HepG2 (cell line): ENCODE measurements at regions of chr11 and their contacts with region 1.

Region 1: GRCh38 chr11:45771566-45772448 is 33.1 kb upstream of the SLC35C1 start:
- DNase-seq: peak; percentile 50
- ATAC-seq: peak; percentile 98
- H3K4me3 ChIP-seq: peak overlapping the region; percentile 52 to 72 (median 60)
- H3K27ac ChIP-seq: no peak overlapping the region
- H3K4me1 ChIP-seq: peaks cover 9% of the 10 kb centered on the region; the same call in 1 of the 2 replicates
- H3K27me3 ChIP-seq: peaks cover 2 to 32% of the 10 kb centered on the region in 2 experiments; a peak in 4 of 5 replicates
- CTCF ChIP-seq: peak; percentile 94
- EP300 ChIP-seq: no peak
- POLR2A ChIP-seq: no peak
- RAD21 ChIP-seq: peak; percentile 89

Region 2: DNA sequence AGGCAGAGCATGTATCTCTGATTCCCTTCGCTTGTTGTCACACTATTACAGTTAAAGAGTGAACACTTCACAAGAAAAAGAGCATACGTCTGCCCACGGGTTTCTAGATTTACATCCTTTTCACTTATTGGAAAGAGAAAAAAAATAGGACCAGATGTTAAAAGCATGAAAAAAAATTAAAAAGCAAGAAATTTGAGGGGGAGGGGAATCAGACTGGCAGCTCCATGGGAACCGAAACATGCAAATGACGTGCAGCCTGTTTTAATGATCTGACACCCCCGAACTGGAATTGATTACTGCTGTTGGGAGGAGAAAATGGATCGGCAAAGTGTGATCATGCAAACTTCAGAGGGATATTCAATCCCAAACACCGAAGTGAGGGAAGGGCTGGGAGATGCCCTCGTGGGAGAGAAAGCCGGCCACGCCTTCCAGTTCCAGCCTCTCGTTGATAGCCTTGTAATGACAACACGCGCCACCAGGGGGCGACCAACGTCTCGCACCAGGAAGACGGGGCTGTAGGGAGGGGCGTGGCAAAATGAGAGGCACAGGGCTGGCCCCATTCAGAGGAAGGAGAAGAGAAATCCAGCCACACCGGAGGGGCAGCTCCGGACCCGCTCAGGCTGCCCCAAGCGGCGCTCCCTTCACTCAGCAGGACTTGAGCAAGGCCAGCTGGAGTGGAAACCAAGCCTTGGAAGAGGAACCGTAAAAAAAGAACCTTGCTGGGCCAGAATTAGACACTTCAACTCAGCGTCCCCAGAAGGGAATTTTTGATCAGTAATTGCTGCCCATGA is 431.9 kb before region 1 on chr11:
- CTCF ChIA-PET with region 1: interaction called, 13 read pairs
- POLR2A ChIA-PET with region 1: no interaction called
- in situ Hi-C with region 1: loop called (anchors 10 kb)
- intact Hi-C with region 1: no loop called
- DNase-seq: peak; percentile 78
- ATAC-seq: peak; percentile 98
- H3K4me3 ChIP-seq: no peak overlapping the region
- H3K27ac ChIP-seq: no peak overlapping the region
- H3K4me1 ChIP-seq: no peaks in the 10 kb centered on the region
- H3K27me3 ChIP-seq: peaks cover 2 to 6% of the 10 kb centered on the region in 2 experiments; a peak in 3 of 5 replicates
- CTCF ChIP-seq: peak; percentile 92
- EP300 ChIP-seq: no peak
- POLR2A ChIP-seq: no peak
- RAD21 ChIP-seq: peak; percentile 53